ENCODE measurements at regions of chr1 and their contacts with region 1.

Region 1: DNA sequence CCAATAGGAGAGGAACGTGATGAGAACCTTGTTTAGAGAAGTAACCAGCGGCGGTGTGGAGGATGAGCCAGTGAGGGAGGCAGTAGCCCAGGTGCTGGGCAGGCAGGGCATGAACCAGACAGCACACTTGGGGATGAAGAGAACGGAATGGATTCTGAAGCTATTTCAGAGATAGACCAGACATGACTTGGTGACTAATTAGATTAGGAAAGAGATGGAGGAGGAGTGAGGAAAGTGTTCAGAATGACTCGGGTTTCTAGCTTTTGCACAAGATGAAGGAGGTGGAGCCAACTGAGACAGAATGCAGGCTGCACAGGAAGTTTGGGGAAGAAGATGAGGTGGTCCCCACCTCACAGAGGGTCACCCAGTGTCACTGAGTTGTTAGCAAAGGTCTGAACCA is 5.1 kb downstream of the PEF1 start:
- DNase-seq: no peak
- ATAC-seq: no peak
- H3K4me3 ChIP-seq: no peak overlapping the region
- H3K27ac ChIP-seq: no peak overlapping the region
- H3K4me1 ChIP-seq: peaks cover 9% of the 10 kb centered on the region
- H3K27me3 ChIP-seq: no peaks in the 10 kb centered on the region
- CTCF ChIP-seq: no peak
- EP300 ChIP-seq: no peak
- POLR2A ChIP-seq: no peak
- RAD21 ChIP-seq: no peak

Region 2: GRCh38 chr1:30718091-30718635 is 921.4 kb before region 1 on chr1:
- CTCF ChIA-PET with region 1: no interaction called
- POLR2A ChIA-PET with region 1: no interaction called
- RAD21 ChIA-PET with region 1: no interaction called
- SMC1A ChIA-PET with region 1: no interaction called
- in situ Hi-C with region 1: no loop called
- intact Hi-C with region 1: no loop called
- DNase-seq: peak; percentile 76
- ATAC-seq: peak; percentile 93
- H3K4me3 ChIP-seq: peak overlapping the region; percentile 68; the same call in 1 of the 2 replicates
- H3K27ac ChIP-seq: no peak overlapping the region
- H3K4me1 ChIP-seq: peaks cover 18% of the 10 kb centered on the region
- H3K27me3 ChIP-seq: no peaks in the 10 kb centered on the region
- CTCF ChIP-seq: no peak
- EP300 ChIP-seq: no peak
- POLR2A ChIP-seq: no peak; the same call in 1 of the 2 replicates
- RAD21 ChIP-seq: no peak

Region 3: GRCh38 chr1:31627930-31628421 is 11.6 kb before region 1 on chr1:
- CTCF ChIA-PET with region 1: interaction called, 18 read pairs
- POLR2A ChIA-PET with region 1: interaction called, 5 read pairs
- RAD21 ChIA-PET with region 1: interaction called, 3 read pairs
- SMC1A ChIA-PET with region 1: interaction called, 4 read pairs
- in situ Hi-C with region 1: no loop called
- intact Hi-C with region 1: no loop called
- DNase-seq: no peak
- ATAC-seq: no peak
- H3K4me3 ChIP-seq: no peak overlapping the region
- H3K27ac ChIP-seq: no peak overlapping the region
- H3K4me1 ChIP-seq: no peaks in the 10 kb centered on the region; the same call in 1 of the 2 replicates
- H3K27me3 ChIP-seq: no peaks in the 10 kb centered on the region
- CTCF ChIP-seq: no peak
- EP300 ChIP-seq: no peak
- POLR2A ChIP-seq: no peak
- RAD21 ChIP-seq: no peak

Region 4: GRCh38 chr1:31651089-31651420 is 11.5 kb after region 1 on chr1:
- CTCF ChIA-PET with region 1: interaction called, 9 read pairs
- POLR2A ChIA-PET with region 1: interaction called, 4 read pairs
- RAD21 ChIA-PET with region 1: interaction called, 7 read pairs
- SMC1A ChIA-PET with region 1: interaction called, 19 read pairs
- in situ Hi-C with region 1: no loop called
- intact Hi-C with region 1: no loop called
- DNase-seq: no peak
- ATAC-seq: no peak
- H3K4me3 ChIP-seq: no peak overlapping the region
- H3K27ac ChIP-seq: no peak overlapping the region
- H3K4me1 ChIP-seq: no peaks in the 10 kb centered on the region
- H3K27me3 ChIP-seq: no peaks in the 10 kb centered on the region; a peak in 1 of 4 replicates
- CTCF ChIP-seq: no peak
- EP300 ChIP-seq: no peak
- POLR2A ChIP-seq: no peak
- RAD21 ChIP-seq: no peak